ENCODE measurements at regions of chr1 and their contacts with region 1.

Region 1: DNA sequence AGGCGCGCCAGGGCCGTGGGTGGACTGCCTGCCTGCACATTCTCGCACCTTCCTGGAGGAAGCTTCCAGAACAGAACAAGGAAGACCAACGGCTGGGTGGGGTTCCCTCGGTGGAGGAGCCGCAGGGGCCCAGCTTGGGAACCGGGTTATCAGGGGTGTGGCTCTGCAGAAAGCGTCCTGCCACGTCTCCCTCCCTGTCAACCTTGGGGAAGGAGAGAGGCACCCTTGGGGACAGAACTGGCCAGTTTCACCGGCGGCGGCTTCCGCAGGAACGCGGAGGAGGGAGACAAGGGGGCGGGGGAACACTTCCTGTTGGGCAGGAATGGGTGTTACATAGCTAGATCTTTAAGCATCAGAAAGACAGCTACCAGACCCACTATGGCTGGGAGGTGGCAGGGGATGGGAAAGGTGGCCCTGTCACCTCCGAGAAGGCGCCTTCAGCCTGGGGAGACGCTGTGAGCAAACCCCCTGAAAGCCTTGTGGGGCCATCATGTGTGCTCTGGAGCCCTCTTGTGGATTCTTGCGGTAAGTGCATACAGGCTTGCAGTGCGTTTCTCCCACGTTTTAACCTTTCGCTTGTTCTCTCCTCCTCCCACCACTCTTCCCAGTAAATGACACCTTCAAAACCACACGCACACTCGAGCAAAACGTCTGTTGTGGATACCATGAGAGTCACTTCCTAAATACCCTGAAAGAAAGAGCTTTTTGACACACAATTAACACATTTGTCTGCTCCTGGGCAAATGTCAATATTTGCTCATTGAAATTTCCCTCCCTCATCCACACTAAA is 3.8 kb upstream of the PLEKHA6 start:
- DNase-seq: peak; percentile 34 to 54
- H3K4me3 ChIP-seq: no peak overlapping the region
- H3K27ac ChIP-seq: no peak overlapping the region
- H3K4me1 ChIP-seq: 0 out of 2 replicates have a peak, but pooled peaks cover 3% of the 10 kb centered on the region
- H3K27me3 ChIP-seq: no peaks in the 10 kb centered on the region
- CTCF ChIP-seq: peak; percentile 98

Region 2: GRCh38 chr1:203340112-203340804 is 1023.3 kb before region 1 on chr1:
- CTCF ChIA-PET with region 1: no interaction called
- POLR2A ChIA-PET with region 1: no interaction called
- intact Hi-C with region 1: no loop called
- DNase-seq: peak; percentile 67 to 75
- H3K4me3 ChIP-seq: no peak overlapping the region
- H3K27ac ChIP-seq: no peak overlapping the region
- H3K4me1 ChIP-seq: no peaks in the 10 kb centered on the region
- H3K27me3 ChIP-seq: peaks cover 32% of the 10 kb centered on the region
- CTCF ChIP-seq: peak; percentile 90

Region 3: DNA sequence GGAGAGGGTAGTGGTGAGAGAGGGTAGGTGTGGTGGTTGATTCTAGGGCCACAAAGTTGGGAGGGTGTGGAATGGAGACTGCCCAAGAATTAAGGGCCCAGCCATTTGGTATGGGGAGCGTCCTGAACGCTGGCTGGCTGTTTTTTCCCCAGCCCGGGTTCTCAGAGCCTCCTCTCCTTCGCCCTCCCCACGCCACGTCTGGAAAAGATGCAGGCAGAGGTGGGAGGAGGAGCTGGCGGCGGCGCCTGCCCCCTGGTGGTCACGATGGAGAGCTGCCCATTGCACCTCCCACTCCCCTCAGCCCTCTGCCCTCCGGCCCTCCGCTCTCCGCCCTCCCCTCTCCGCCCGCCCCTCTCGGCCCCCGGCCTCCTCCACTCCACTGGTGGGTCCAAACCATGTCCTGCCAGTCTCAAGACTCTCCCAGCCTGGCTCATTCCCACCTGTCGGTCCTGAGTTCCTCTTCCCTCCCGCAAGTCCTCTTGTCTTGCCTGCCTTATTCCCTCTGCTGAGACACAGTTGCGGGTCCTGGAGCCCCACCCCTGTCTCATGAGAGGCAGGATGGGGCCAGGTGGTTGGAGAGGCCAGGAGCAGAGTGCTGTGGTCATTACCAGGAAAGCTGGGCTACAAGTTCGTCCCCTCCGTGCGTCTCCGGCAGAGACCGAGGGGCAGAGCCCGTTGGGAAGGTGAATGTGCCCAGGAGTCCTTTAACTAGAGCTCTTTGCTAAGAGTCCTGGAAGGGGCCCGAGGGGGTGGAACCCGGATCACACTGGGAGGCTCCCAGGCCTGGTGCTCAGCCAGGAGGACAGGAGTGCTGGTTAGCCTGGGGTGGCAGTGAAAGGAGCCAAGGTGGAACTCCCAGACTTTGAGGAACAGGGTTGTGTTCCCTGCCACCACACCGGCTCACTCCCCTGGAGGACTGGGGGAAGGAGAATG is 234.3 kb before region 1 on chr1:
- CTCF ChIA-PET with region 1: no interaction called
- POLR2A ChIA-PET with region 1: no interaction called
- intact Hi-C with region 1: no loop called
- DNase-seq: peak in 1 of 2 experiments; percentile 61
- H3K4me3 ChIP-seq: no peak overlapping the region
- H3K27ac ChIP-seq: peak overlapping the region; percentile 80
- H3K4me1 ChIP-seq: peaks cover 66% of the 10 kb centered on the region
- H3K27me3 ChIP-seq: no peaks in the 10 kb centered on the region
- CTCF ChIP-seq: peak; percentile 80

Region 4: GRCh38 chr1:204207136-204207616 is 156.4 kb before region 1 on chr1:
- CTCF ChIA-PET with region 1: interaction called, 12 read pairs
- POLR2A ChIA-PET with region 1: no interaction called
- intact Hi-C with region 1: loop called (anchors 2 kb)
- DNase-seq: peak in 1 of 2 experiments; percentile 74
- H3K4me3 ChIP-seq: no peak overlapping the region
- H3K27ac ChIP-seq: no peak overlapping the region
- H3K4me1 ChIP-seq: peaks cover 29% of the 10 kb centered on the region
- H3K27me3 ChIP-seq: no peaks in the 10 kb centered on the region
- CTCF ChIP-seq: peak; percentile 92

Region 5: GRCh38 chr1:204286831-204287421 is 76.6 kb before region 1 on chr1:
- CTCF ChIA-PET with region 1: no interaction called
- POLR2A ChIA-PET with region 1: interaction called, 4 read pairs
- intact Hi-C with region 1: loop called (anchors 5 kb)
- DNase-seq: peak; percentile 72 to 88
- H3K4me3 ChIP-seq: peak overlapping the region; percentile 56
- H3K27ac ChIP-seq: peak overlapping the region; percentile 80
- H3K4me1 ChIP-seq: peaks cover 57% of the 10 kb centered on the region
- H3K27me3 ChIP-seq: no peaks in the 10 kb centered on the region
- CTCF ChIP-seq: no peak

Region 6: GRCh38 chr1:204633665-204634064 is 270.1 kb after region 1 on chr1:
- CTCF ChIA-PET with region 1: no interaction called
- POLR2A ChIA-PET with region 1: no interaction called
- intact Hi-C with region 1: no loop called
- DNase-seq: no peak
- H3K4me3 ChIP-seq: no peak overlapping the region
- H3K27ac ChIP-seq: no peak overlapping the region
- H3K4me1 ChIP-seq: no peaks in the 10 kb centered on the region
- H3K27me3 ChIP-seq: peaks cover 6% of the 10 kb centered on the region; the same call in 1 of the 2 replicates
- CTCF ChIP-seq: no peak

Measured in PC-9 (cell line).